Heart left ventricle (tissue), 16 donors: ENCODE measurements at regions of chr1 and their contacts with region 1.

Region 1: DNA sequence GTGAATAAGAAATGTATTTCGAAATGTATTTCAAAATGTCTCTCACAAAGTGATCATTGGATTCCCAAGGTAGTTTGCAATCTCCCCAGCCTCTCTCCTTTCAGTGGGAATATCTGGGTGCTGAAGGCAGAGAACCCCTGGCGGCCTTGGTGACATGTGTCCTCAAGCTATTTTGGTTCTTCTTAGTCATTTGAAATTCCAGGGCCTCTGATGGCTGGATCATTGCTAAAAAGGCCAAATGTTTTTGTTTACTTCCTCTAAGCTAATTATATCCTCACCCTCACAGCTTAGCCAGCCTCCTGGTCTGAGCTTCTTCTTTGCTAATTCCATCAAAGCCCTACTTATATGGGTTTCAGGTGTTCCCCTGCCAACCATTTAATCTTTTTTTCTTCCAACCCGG is 71.2 kb downstream of the LRRC40 start:
- DNase-seq: peak in 2 of 5 donors; percentile 10 to 22
- ATAC-seq: peak; percentile 55 to 89 (median 83)
- H3K4me3 ChIP-seq: no peak overlapping the region
- H3K27ac ChIP-seq: peak overlapping the region in 7 of 12 donors; percentile 3 to 46 (median 19)
- H3K4me1 ChIP-seq: peaks cover 0 to 11% (median 3%) of the 10 kb centered on the region in 12 donors
- H3K27me3 ChIP-seq: no peaks in the 10 kb centered on the region
- CTCF ChIP-seq: no peak
- POLR2A ChIP-seq: no peak

Region 2: DNA sequence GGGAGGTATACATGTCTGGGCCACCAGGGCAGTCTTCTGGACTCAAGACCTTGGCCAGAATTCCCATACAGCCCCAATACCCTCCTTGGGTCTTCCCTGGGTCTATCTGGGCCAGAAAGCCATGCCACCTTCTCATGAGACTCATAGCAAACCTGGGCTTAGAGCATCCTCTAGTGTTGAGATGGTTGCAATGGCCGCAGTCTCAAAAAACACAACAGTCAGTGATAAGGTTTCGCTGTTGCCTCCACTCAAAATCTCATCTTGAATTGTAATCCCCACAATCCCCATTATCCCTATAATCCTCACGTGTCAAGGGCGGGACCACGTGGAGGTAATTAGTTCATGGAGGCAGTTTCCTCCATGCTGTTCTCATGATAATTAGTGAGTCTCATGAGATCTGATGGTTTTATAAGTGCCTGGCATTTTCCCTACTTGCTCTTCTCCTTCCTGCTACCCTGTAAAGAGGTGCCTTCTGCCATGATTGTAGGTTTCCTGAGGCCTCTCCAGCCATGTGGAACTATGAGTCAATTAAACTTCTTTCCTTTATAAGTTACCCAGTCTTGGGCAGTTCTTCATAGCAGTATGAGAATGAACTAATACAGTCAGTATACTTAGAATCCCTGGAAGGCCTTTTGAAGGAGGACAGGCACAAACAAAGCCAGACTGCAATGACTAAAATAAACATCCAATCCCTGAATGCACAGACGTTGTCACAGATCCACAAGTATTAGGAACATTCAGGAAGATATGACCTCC is 353.9 kb after region 1 on chr1:
- intact Hi-C with region 1: loop called in 6 of 10 experiments (anchors 5 to 10 kb)
- DNase-seq: no peak
- ATAC-seq: peak in 3 of 4 donors; percentile 44 to 62 (median 50)
- H3K4me3 ChIP-seq: no peak overlapping the region
- H3K27ac ChIP-seq: no peak overlapping the region
- H3K4me1 ChIP-seq: peaks cover 0 to 13% (median 3%) of the 10 kb centered on the region in 12 donors
- H3K27me3 ChIP-seq: no peaks in the 10 kb centered on the region
- CTCF ChIP-seq: peak; percentile 22 to 70 (median 56)
- POLR2A ChIP-seq: no peak

Region 3: GRCh38 chr1:70509996-70510876 is 376.1 kb after region 1 on chr1:
- intact Hi-C with region 1: loop called (anchors 1 to 10 kb)
- DNase-seq: no peak
- ATAC-seq: peak; percentile 58 to 87 (median 64)
- H3K4me3 ChIP-seq: no peak overlapping the region
- H3K27ac ChIP-seq: no peak overlapping the region
- H3K4me1 ChIP-seq: no peaks in the 10 kb centered on the region
- H3K27me3 ChIP-seq: peaks cover 0 to 3% (median 0%) of the 10 kb centered on the region in 9 donors
- CTCF ChIP-seq: peak; percentile 46 to 76 (median 66)
- POLR2A ChIP-seq: no peak